ENCODE measurements at regions of chr12 and their contacts with region 1.

Region 1: DNA sequence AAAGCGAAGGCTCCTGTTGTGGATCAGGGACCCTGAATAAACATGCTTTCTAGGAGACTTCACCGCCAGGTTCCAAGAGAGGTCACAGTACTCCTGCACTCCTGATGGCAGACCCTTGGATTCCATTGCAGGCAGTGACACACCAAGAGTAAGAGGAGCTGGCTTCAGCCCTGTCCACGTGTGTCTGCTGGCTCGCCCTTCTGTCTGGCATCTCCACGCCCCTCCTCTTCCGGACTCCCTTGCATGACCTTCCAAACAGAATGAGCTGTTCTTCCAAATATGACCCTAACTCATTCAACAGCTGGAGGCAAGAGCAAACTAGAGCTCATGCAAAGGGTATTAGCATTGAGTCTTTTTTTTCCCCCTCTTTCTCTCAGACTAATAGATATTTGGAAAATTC is 233.0 kb upstream of the PLEKHG7 start:
- DNase-seq: no peak
- H3K4me3 Mint-ChIP-seq: no peak overlapping the region
- H3K27ac Mint-ChIP-seq: peak overlapping the region; percentile 89
- H3K4me1 Mint-ChIP-seq: peaks cover 49% of the 10 kb centered on the region
- H3K27me3 Mint-ChIP-seq: no peaks in the 10 kb centered on the region

Region 2: GRCh38 chr12:92218394-92219077 is 251.3 kb before region 1 on chr12:
- CTCF ChIA-PET with region 1: no interaction called
- intact Hi-C with region 1: loop called (anchors 5 kb)
- DNase-seq: no peak
- H3K4me3 Mint-ChIP-seq: no peak overlapping the region
- H3K27ac Mint-ChIP-seq: peak overlapping the region; percentile 72
- H3K4me1 Mint-ChIP-seq: peaks cover 31% of the 10 kb centered on the region
- H3K27me3 Mint-ChIP-seq: no peaks in the 10 kb centered on the region

Region 3: GRCh38 chr12:92485351-92486348 is 15.8 kb after region 1 on chr12:
- CTCF ChIA-PET with region 1: no interaction called
- intact Hi-C with region 1: loop called (anchors 1 kb)
- DNase-seq: no peak
- H3K4me3 Mint-ChIP-seq: no peak overlapping the region
- H3K27ac Mint-ChIP-seq: peak overlapping the region; percentile 32
- H3K4me1 Mint-ChIP-seq: peaks cover 25% of the 10 kb centered on the region
- H3K27me3 Mint-ChIP-seq: no peaks in the 10 kb centered on the region

Region 4: GRCh38 chr12:92551853-92552397 is 82.1 kb after region 1 on chr12:
- CTCF ChIA-PET with region 1: no interaction called
- intact Hi-C with region 1: loop called (anchors 1 kb)
- DNase-seq: peak; percentile 83
- H3K4me3 Mint-ChIP-seq: no peak overlapping the region
- H3K27ac Mint-ChIP-seq: no peak overlapping the region
- H3K4me1 Mint-ChIP-seq: peaks cover 38% of the 10 kb centered on the region
- H3K27me3 Mint-ChIP-seq: no peaks in the 10 kb centered on the region

Region 5: DNA sequence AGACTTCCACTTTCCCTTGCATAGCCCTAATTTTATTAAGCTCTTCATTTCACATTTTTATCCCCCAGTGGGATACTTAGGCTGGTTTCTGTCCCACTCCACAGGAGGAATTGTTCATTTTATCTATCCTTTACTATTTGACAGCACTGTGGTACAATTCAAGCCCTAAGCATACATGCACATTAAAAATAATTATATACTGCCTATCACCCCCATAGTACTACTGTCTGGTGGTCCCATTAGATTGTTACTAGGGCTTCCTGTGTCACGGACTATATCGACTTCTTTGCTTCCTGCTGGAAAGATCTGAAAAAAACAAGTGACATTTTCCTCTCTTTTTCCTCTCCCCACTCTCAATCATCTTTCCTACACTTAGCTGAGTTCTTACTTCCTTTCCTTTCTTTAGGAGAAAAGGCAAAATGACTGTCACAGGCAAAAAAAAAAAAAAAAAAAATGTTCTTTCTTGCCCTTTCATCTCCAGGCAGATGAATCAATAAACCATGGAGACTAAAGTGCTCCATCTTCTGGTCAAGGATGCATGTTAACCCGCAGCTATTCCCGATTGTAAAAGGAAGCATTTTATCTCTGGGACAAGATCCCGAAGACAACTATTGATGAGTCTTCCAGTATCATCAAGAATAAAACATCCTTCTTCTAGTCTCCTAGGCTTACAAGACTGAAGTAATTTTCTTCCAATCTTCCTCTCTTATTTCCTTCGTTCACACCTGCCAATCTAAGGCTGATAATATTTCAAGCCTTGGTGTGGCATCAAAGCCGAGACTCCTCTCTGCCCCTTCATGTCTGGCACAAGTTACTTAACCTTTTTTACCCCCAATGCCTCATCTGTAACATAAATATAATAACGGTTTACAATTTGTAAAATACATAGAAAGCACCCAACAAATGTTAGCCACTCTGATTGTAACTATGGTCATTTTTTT is 138.6 kb after region 1 on chr12:
- CTCF ChIA-PET with region 1: no interaction called
- intact Hi-C with region 1: loop called (anchors 1 kb)
- DNase-seq: no peak
- H3K4me3 Mint-ChIP-seq: no peak overlapping the region
- H3K27ac Mint-ChIP-seq: no peak overlapping the region
- H3K4me1 Mint-ChIP-seq: peaks cover 29% of the 10 kb centered on the region
- H3K27me3 Mint-ChIP-seq: no peaks in the 10 kb centered on the region

Measured in activated naive CD4-positive, alpha-beta T cell treated with anti-CD3 and anti-CD28 coated beads for 36 hours (primary cell).